ENCODE measurements at regions of chr2 and their contacts with region 1.

Region 1: DNA sequence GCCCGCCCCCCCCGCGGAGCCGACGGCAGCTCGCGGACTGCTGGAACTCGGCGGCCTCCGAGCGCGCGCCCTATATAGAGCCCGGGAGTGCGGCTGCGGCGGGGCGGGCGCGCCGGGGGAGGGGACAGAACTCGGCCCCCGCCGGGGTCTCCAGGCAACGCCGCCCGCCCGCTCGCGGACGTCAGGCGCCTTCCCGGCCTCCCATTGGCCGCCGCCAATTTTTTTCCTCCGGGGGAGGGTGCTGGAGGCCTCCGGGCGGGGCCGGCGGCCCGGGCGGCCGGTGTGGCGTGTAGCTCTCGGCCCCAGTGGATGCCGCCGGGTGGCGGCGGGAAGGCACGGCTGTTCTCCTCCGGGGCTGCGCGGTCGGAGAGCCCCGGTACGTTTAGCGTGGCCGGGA is at the start of gene ZFP36L2:
- DNase-seq: no peak
- ATAC-seq: peak; percentile 69
- H3K4me3 ChIP-seq: peak within 1 kb of the TSS; percentile 84
- H3K27ac ChIP-seq: peak within 1 kb of the TSS; percentile 97
- H3K4me1 ChIP-seq: peaks cover 22% of the 10 kb centered on the region
- H3K27me3 ChIP-seq: no peaks in the 10 kb centered on the region
- CTCF ChIP-seq: no peak
- EP300 ChIP-seq: peak in 1 of 2 experiments; percentile 40; a peak in 1 of 4 replicates
- POLR2A ChIP-seq: no peak
- RAD21 ChIP-seq: no peak
- polyA plus RNA-seq, gene ZFP36L2: 25.5 to 43.3 TPM

Region 2: GRCh38 chr2:41379496-41380221 is 1846.9 kb before region 1 on chr2:
- CTCF ChIA-PET with region 1: no interaction called
- POLR2A ChIA-PET with region 1: no interaction called
- RAD21 ChIA-PET with region 1: no interaction called
- SMC1A ChIA-PET with region 1: no interaction called
- in situ Hi-C with region 1: no loop called
- intact Hi-C with region 1: no loop called
- DNase-seq: no peak
- ATAC-seq: no peak
- H3K4me3 ChIP-seq: no peak overlapping the region
- H3K27ac ChIP-seq: no peak overlapping the region
- H3K4me1 ChIP-seq: no peaks in the 10 kb centered on the region
- H3K27me3 ChIP-seq: no peaks in the 10 kb centered on the region
- CTCF ChIP-seq: no peak
- EP300 ChIP-seq: no peak
- POLR2A ChIP-seq: no peak
- RAD21 ChIP-seq: no peak

Region 3: DNA sequence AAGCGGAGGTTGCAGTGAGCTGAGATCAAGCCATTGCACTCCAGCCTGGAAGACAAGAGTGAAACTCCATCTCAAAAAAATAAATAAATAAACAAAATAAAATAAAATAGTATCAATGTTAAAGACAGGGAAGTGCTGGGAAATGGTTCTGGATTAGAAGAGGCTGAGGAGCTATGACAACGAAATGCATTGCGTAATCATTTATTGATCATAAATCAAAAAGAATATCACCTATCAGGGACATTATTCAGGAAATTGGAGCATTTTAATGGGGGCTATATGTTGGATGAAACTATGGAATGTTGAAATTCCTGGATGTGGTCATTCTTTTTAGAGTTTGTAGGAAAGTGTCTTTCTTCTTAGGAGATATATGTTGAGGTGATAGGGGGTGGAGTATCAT is 689.1 kb before region 1 on chr2:
- CTCF ChIA-PET with region 1: no interaction called
- POLR2A ChIA-PET with region 1: no interaction called
- RAD21 ChIA-PET with region 1: no interaction called
- SMC1A ChIA-PET with region 1: no interaction called
- in situ Hi-C with region 1: no loop called
- intact Hi-C with region 1: no loop called
- DNase-seq: no peak
- ATAC-seq: no peak
- H3K4me3 ChIP-seq: no peak overlapping the region
- H3K27ac ChIP-seq: no peak overlapping the region
- H3K4me1 ChIP-seq: no peaks in the 10 kb centered on the region
- H3K27me3 ChIP-seq: no peaks in the 10 kb centered on the region
- CTCF ChIP-seq: no peak
- EP300 ChIP-seq: no peak
- POLR2A ChIP-seq: no peak
- RAD21 ChIP-seq: no peak

Region 4: GRCh38 chr2:42859006-42859552 is 367.5 kb before region 1 on chr2:
- CTCF ChIA-PET with region 1: interaction called, 17 read pairs
- POLR2A ChIA-PET with region 1: interaction called, 4 read pairs
- RAD21 ChIA-PET with region 1: interaction called, 12 read pairs
- SMC1A ChIA-PET with region 1: interaction called, 18 read pairs
- in situ Hi-C with region 1: no loop called
- intact Hi-C with region 1: loop called (anchors 10 kb)
- DNase-seq: peak; percentile 52
- ATAC-seq: peak; percentile 70
- H3K4me3 ChIP-seq: no peak overlapping the region
- H3K27ac ChIP-seq: no peak overlapping the region
- H3K4me1 ChIP-seq: no peaks in the 10 kb centered on the region
- H3K27me3 ChIP-seq: peaks cover 0 to 2% of the 10 kb centered on the region in 2 experiments; a peak in 1 of 4 replicates
- CTCF ChIP-seq: peak; percentile 68 to 90 (median 86)
- EP300 ChIP-seq: no peak
- POLR2A ChIP-seq: no peak
- RAD21 ChIP-seq: peak; percentile 94

Region 5: DNA sequence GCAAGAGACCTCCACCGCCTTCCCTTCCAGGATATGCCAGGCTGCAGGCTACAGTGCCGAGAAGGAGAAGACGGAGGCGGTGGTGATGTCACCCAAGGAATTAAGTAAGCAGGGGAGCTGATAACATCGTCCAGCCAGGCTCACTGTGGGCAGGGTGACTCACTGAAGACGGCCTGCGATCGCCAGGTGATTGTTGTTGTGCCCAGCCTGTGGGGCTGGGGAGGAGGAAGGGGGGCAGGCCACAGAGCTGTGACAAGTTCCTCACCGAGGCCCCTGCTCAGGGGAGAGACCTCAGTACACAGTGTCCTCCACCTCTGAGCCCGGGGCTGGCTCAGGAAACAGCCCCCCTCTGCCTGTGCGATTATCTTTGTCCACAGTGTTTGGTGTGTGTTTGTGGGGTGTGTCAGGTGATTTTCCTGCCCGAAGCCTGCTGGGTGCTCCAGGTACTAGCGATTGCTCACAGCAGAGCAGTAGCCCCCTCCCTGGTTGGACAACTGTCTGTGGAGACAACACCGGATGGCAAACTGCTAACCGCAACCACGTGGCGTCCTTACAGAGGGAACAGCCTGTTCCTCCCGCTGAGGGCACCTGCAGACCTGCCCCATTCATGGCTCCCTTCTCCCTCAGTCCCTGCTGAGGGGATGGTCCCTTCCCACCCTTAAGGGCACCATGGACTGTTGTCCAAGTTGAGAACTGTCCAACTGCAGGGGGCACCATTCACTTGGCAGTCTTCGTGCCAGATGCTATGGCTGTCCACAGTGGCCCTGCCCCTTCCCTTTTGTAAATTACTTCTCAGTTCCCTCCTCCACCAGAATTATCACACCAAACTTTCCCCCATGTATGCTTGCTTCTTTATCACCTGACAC is 95.3 kb before region 1 on chr2:
- CTCF ChIA-PET with region 1: interaction called, 132 read pairs
- POLR2A ChIA-PET with region 1: interaction called, 17 read pairs
- RAD21 ChIA-PET with region 1: interaction called, 151 read pairs
- SMC1A ChIA-PET with region 1: interaction called, 170 read pairs
- in situ Hi-C with region 1: loop called (anchors 5 kb)
- intact Hi-C with region 1: loop called (anchors 1 kb)
- DNase-seq: no peak
- ATAC-seq: peak; percentile 81
- H3K4me3 ChIP-seq: no peak overlapping the region
- H3K27ac ChIP-seq: no peak overlapping the region
- H3K4me1 ChIP-seq: peaks cover 43% of the 10 kb centered on the region
- H3K27me3 ChIP-seq: no peaks in the 10 kb centered on the region
- CTCF ChIP-seq: peak; percentile 61 to 82 (median 62); a peak in 5 of 6 replicates
- EP300 ChIP-seq: no peak; a peak in 1 of 4 replicates
- POLR2A ChIP-seq: no peak
- RAD21 ChIP-seq: peak; percentile 78

Region 6: GRCh38 chr2:43178602-43179542 is 47.7 kb before region 1 on chr2:
- CTCF ChIA-PET with region 1: interaction called, 103 read pairs
- POLR2A ChIA-PET with region 1: interaction called, 11 read pairs
- RAD21 ChIA-PET with region 1: interaction called, 66 read pairs
- SMC1A ChIA-PET with region 1: interaction called, 147 read pairs
- in situ Hi-C with region 1: no loop called
- intact Hi-C with region 1: loop called (anchors 2 kb)
- DNase-seq: no peak
- ATAC-seq: no peak
- H3K4me3 ChIP-seq: no peak overlapping the region
- H3K27ac ChIP-seq: no peak overlapping the region
- H3K4me1 ChIP-seq: peaks cover 13% of the 10 kb centered on the region
- H3K27me3 ChIP-seq: no peaks in the 10 kb centered on the region
- CTCF ChIP-seq: no peak
- EP300 ChIP-seq: no peak
- POLR2A ChIP-seq: no peak
- RAD21 ChIP-seq: no peak

Region 7: GRCh38 chr2:43402452-43402944 is 175.9 kb after region 1 on chr2:
- CTCF ChIA-PET with region 1: interaction called, 26 read pairs
- POLR2A ChIA-PET with region 1: interaction called, 5 read pairs
- RAD21 ChIA-PET with region 1: interaction called, 56 read pairs
- SMC1A ChIA-PET with region 1: interaction called, 45 read pairs
- in situ Hi-C with region 1: no loop called
- intact Hi-C with region 1: loop called (anchors 1 kb)
- DNase-seq: peak; percentile 79
- ATAC-seq: peak; percentile 73
- H3K4me3 ChIP-seq: peak overlapping the region; percentile 40
- H3K27ac ChIP-seq: peak overlapping the region; percentile 97
- H3K4me1 ChIP-seq: peaks cover 64% of the 10 kb centered on the region
- H3K27me3 ChIP-seq: no peaks in the 10 kb centered on the region
- CTCF ChIP-seq: no peak
- EP300 ChIP-seq: peak in 1 of 2 experiments; percentile 22; a peak in 1 of 4 replicates
- POLR2A ChIP-seq: peak; percentile 38
- RAD21 ChIP-seq: peak; percentile 34

Region 8: GRCh38 chr2:43478411-43479086 is 252.0 kb after region 1 on chr2:
- CTCF ChIA-PET with region 1: interaction called, 128 read pairs
- POLR2A ChIA-PET with region 1: interaction called, 15 read pairs
- RAD21 ChIA-PET with region 1: interaction called, 114 read pairs
- SMC1A ChIA-PET with region 1: interaction called, 118 read pairs
- in situ Hi-C with region 1: loop called (anchors 5 kb)
- intact Hi-C with region 1: no loop called
- DNase-seq: no peak
- ATAC-seq: peak; percentile 56
- H3K4me3 ChIP-seq: no peak overlapping the region
- H3K27ac ChIP-seq: peak overlapping the region; percentile 2; the same call in 1 of the 2 replicates
- H3K4me1 ChIP-seq: peaks cover 25% of the 10 kb centered on the region
- H3K27me3 ChIP-seq: no peaks in the 10 kb centered on the region
- CTCF ChIP-seq: no peak
- EP300 ChIP-seq: peak; percentile 34 to 47; a peak in 1 of 4 replicates
- POLR2A ChIP-seq: no peak
- RAD21 ChIP-seq: no peak

Region 9: GRCh38 chr2:43576981-43577892 is 350.7 kb after region 1 on chr2:
- CTCF ChIA-PET with region 1: interaction called, 11 read pairs
- POLR2A ChIA-PET with region 1: interaction called, 3 read pairs
- RAD21 ChIA-PET with region 1: interaction called, 11 read pairs
- SMC1A ChIA-PET with region 1: interaction called, 5 read pairs
- in situ Hi-C with region 1: no loop called
- intact Hi-C with region 1: no loop called
- DNase-seq: no peak
- ATAC-seq: peak; percentile 45; the same call in 1 of the 3 replicates
- H3K4me3 ChIP-seq: no peak overlapping the region
- H3K27ac ChIP-seq: no peak overlapping the region
- H3K4me1 ChIP-seq: no peaks in the 10 kb centered on the region
- H3K27me3 ChIP-seq: no peaks in the 10 kb centered on the region
- CTCF ChIP-seq: peak; percentile 64 to 73 (median 70); a peak in 5 of 6 replicates
- EP300 ChIP-seq: no peak
- POLR2A ChIP-seq: no peak
- RAD21 ChIP-seq: peak; percentile 61

Measured in GM12878 (cell line).